ENCODE measurements at regions of chr12 and their contacts with region 1.

Region 1: DNA sequence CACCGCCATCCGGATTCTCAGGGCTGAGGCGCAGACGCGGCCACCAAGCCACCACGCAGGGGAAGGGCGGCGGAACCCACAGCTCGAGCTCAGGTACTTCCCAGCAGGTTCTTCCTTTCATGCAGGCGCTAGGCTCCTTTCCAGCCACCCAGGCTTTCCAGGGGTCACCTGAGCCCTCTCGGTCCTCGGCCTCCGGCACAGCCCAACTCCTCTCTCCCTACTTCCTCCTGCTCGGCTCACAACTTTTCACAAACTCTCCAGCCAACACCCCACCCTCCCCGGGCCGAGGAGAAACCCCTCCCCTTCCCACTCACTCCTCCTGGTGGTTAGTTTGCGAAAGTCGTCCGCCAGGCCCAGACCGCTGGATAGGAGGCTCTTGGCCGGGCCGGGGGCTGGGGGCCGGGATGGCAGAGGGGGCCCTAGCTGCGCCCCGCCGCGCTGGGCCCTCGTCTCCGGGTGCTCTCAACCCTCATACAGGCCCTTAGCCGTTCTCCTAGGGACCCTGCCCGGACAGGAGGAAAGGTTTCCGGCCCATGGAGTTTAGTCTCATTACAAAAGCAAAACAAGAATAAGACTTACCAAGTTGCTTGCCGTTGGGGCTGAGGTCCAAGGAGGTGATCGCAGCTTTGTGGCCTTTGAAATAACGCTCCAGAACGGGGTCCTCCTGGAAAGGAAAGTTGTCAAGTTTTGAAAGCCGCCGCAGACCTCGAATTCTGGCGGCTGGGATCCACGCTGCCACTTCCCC is at the start of gene GALNT4:
- DNase-seq: peak in 1 of 2 donors; percentile 94
- H3K4me3 ChIP-seq: peak within 1 kb of the TSS; percentile 78 to 99
- H3K27ac ChIP-seq: peak within 1 kb of the TSS; percentile 94
- H3K4me1 ChIP-seq: peaks cover 54% of the 10 kb centered on the region
- H3K27me3 ChIP-seq: no peaks in the 10 kb centered on the region
- CTCF ChIP-seq: peak in 2 of 3 experiments; percentile 37 to 55
- POLR2A ChIP-seq: no peak
- total RNA-seq, gene GALNT4: 0.49 TPM

Region 2: DNA sequence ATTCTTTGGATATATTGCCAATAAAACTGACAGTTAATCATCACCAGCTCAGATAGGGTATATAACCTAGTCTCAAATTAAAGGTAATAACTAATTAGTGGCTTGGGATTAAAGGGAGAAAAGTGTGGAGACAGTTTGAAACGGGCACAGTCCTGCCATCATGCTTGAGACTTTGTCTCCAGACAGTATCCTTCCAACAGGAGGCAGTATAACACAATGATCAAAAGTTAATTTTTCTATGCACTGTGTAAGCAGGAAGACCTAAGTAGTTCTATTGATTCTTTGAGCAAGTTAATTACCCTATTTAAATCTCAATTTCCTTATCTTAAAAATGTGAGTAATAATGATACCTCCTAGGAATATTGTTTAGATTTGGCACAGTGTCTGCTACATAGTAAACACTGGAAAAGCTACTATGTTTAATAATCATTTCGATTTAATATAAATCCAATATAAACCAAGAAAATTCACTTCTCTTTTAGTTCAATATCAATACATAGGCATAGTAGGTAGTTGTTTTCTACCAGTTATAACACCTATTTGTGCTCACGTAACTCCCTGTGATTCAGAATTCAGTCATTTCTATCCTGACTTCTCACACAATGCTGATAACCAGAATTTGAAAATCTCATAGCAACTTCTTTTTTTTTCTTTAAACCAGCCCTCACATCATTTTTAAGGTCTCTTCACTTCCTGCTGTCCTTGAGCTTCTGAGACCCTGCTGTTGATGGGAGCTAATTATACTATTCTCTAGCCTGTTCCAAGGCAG is 53.8 kb before region 1 on chr12:
- intact Hi-C with region 1: loop called (anchors 10 kb)
- DNase-seq: no peak
- H3K4me3 ChIP-seq: no peak overlapping the region
- H3K27ac ChIP-seq: no peak overlapping the region
- H3K4me1 ChIP-seq: no peaks in the 10 kb centered on the region
- H3K27me3 ChIP-seq: no peaks in the 10 kb centered on the region
- CTCF ChIP-seq: peak; percentile 23 to 37 (median 36)
- POLR2A ChIP-seq: no peak

Measured in vagina (tissue), 2 donors.